K562 (cell line): ENCODE measurements at regions of chr7 and their contacts with region 1.

Region 1: GRCh38 chr7:129163875-129164544 is 19.5 kb downstream of the TSPAN33 start:
- DNase-seq: peak; percentile 65 to 74 (median 68)
- ATAC-seq: peak; percentile 69
- H3K4me3 ChIP-seq: no peak overlapping the region
- H3K27ac ChIP-seq: no peak overlapping the region
- H3K4me1 ChIP-seq: peaks cover 4 to 6% of the 10 kb centered on the region in 2 experiments; a peak in 4 of 5 replicates
- H3K27me3 ChIP-seq: peaks cover 15 to 57% of the 10 kb centered on the region in 2 experiments
- CTCF ChIP-seq: peak; percentile 69 to 96 (median 88); a peak in 5 of 6 replicates
- EP300 ChIP-seq: no peak
- POLR2A ChIP-seq: no peak
- RAD21 ChIP-seq: peak; percentile 55 to 79

Region 2: GRCh38 chr7:128904381-128905197 is 259.4 kb before region 1 on chr7:
- CTCF ChIA-PET with region 1: no interaction called
- POLR2A ChIA-PET with region 1: no interaction called
- in situ Hi-C with region 1: no loop called
- intact Hi-C with region 1: no loop called
- DNase-seq: peak; percentile 64 to 78 (median 72)
- ATAC-seq: peak; percentile 76
- H3K4me3 ChIP-seq: no peak overlapping the region
- H3K27ac ChIP-seq: no peak overlapping the region
- H3K4me1 ChIP-seq: peaks cover 13 to 29% of the 10 kb centered on the region in 2 experiments
- H3K27me3 ChIP-seq: peaks cover 16 to 32% of the 10 kb centered on the region in 2 experiments
- CTCF ChIP-seq: peak; percentile 86 to 92 (median 91)
- EP300 ChIP-seq: no peak
- POLR2A ChIP-seq: no peak
- RAD21 ChIP-seq: peak; percentile 60 to 79

Region 3: DNA sequence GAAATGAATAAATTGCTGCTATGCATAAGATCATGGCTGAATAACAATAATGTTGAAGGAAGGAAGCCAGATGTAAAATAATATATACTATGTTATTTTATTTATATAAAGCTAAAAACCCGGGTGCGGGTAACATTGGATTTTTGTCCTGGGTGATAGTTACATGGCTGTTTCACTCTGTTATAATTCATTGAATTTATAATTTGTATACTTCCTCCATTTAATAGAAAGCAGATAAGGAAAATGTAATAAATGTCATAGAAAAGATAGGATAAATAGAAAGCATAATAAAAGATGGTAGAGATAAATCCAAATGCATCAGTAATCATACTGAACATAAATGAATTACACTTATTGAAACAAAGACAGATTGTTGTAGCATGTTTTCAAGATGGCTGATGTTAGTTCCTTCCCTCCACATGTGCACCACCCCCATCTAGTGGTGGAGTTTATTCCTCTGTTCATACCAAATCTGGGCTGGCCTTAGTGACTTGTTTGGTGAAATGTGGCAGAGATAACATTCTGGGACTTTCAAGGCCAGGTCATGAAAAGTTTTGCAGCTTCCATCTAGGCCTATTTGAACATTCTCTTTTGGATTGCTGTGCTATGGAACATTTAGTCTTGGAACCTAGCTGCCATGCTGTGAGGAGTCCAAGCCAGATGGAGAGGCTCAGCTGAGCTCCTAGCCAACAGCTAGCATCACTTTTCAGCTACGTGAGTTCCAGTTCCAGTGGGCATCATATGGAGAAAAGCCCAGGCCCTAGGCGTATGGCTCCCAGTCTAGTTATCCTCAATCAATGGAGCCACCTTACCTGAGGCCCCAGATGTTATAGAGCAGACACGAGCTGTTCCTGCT is 107.7 kb after region 1 on chr7:
- CTCF ChIA-PET with region 1: no interaction called
- POLR2A ChIA-PET with region 1: no interaction called
- in situ Hi-C with region 1: no loop called
- intact Hi-C with region 1: loop called (anchors 5 kb)
- DNase-seq: peak; percentile 73 to 83 (median 76)
- ATAC-seq: peak; percentile 99
- H3K4me3 ChIP-seq: no peak overlapping the region
- H3K27ac ChIP-seq: no peak overlapping the region
- H3K4me1 ChIP-seq: no peaks in the 10 kb centered on the region
- H3K27me3 ChIP-seq: no peaks in the 10 kb centered on the region
- CTCF ChIP-seq: peak; percentile 85 to 96 (median 85)
- EP300 ChIP-seq: no peak
- POLR2A ChIP-seq: no peak
- RAD21 ChIP-seq: peak; percentile 61 to 93